Ascending aorta (tissue), 2 donors: ENCODE measurements at regions of chr9 and their contacts with region 1.

Region 1: DNA sequence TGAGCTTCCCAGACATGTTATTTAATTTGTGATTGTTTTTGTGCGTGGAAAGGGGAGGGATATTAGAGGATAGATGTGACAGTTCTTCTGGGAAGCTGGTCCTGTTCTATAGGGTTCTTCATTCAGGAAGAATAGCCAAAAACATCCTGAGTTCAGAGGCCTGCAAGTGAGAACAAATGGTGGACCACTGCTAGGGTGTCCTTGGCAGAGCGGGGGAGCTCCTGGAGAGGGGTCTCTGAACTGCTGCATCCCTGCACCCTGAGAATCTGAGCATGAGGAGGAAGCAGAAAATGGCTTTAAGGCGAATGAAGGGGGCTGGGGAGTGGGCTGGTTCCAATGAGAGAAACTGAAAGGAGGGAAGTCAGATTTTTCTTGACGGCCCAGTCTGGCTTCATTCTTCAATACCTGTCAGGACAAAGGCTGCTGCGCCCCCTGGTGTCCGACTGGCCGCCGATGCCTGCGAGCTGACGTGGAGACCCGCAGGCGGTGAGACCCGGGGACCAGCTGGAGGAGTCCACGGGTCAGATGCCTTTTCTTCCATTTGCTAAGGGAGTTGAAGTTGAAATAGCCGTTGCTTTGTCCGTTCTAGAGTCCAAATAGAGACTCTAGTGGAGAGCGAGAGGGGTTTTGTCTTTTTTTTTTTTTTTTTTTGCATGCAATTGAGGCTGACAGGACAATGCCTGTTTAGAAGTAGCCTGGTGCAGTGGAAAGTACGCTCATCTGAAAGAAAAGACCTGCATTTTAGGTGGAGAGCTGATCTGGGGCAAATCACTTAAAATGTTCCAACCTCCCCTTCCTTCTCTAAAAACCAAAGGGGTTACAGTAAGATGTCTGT is 39.5 kb upstream of the NFIB start:
- DNase-seq: peak; percentile 49 to 96
- H3K4me3 ChIP-seq: peak overlapping the region; percentile 18 to 68
- H3K27ac ChIP-seq: peak overlapping the region; percentile 87 to 90
- H3K4me1 ChIP-seq: peaks cover 14 to 35% of the 10 kb centered on the region in 2 donors
- H3K27me3 ChIP-seq: no peaks in the 10 kb centered on the region
- CTCF ChIP-seq: peak; percentile 87 to 96 (median 90)

Region 2: DNA sequence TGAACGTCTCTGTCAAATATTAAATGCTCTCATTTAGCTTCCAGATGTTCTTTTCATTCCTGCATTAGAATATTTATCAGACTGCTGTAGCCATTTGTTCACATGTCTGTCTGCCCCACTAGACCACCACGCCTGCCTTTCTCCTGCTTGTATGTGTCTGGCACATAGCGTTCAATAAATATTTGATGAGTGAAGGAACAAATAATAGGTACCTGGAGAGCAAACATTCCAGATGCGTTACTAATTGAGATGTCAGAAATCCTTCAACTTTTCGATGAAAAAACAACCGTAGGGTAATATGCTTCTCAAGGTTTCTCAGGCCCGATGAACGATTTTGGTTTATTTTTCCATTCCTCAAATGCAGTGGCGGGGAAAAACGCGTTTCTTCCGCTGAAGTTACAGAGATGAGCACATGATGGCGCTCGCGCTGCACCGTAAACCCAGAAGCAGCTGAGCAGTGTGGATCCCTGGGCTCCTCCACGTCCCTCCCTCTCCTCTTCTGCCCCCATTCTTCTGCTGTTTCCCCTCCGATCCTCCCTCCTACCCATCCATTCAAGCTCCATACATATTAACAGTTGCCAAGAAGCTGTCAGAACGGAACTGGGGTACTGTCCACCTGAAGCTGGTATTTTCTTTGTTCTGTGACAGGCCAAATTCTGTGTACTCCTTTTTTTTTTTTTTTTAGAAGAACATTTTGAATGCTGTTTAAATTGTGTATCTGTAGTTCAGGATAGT is 1319.3 kb before region 1 on chr9:
- intact Hi-C with region 1: loop called (anchors 10 kb)
- DNase-seq: peak in 1 of 2 donors; percentile 77
- H3K4me3 ChIP-seq: peak overlapping the region in 1 of 2 donors; percentile 55
- H3K27ac ChIP-seq: no peak overlapping the region
- H3K4me1 ChIP-seq: no peaks in the 10 kb centered on the region
- H3K27me3 ChIP-seq: no peaks in the 10 kb centered on the region
- CTCF ChIP-seq: peak; percentile 67 to 77 (median 67)

Region 3: GRCh38 chr9:13427587-13427986 is 925.9 kb before region 1 on chr9:
- intact Hi-C with region 1: loop called (anchors 1 kb)
- DNase-seq: no peak
- H3K4me3 ChIP-seq: no peak overlapping the region
- H3K27ac ChIP-seq: no peak overlapping the region
- H3K4me1 ChIP-seq: no peaks in the 10 kb centered on the region
- H3K27me3 ChIP-seq: no peaks in the 10 kb centered on the region
- CTCF ChIP-seq: peak; percentile 52 to 79 (median 68)

Region 4: DNA sequence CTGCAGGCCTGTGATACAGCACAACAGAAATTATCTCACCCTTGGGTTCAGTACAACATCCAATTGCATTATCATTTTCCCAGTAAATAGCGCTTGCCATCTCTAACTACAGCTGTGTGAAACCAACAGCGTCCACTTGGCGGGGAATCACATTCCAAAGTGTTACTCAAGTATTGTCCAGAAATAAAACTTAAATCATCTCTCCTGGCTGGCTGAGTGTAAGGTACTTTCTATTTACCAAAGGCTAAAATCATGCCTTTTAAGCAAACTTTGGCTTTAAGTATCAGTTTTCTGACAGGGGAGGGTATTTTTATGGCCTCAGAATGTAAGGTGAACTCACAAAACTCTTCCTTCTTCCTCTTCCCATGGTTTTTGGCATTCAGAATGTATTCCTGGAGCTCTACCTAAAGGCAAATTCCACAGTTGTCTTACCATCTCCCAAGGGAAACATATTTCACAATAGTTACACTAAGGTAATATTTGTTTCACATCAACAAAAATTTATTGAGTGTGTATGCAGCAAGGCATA is 868.3 kb before region 1 on chr9:
- intact Hi-C with region 1: loop called (anchors 5 kb)
- DNase-seq: peak in 1 of 2 donors; percentile 87
- H3K4me3 ChIP-seq: peak overlapping the region in 1 of 2 donors; percentile 33
- H3K27ac ChIP-seq: peak overlapping the region; percentile 60 to 74
- H3K4me1 ChIP-seq: peaks cover 0 to 14% of the 10 kb centered on the region in 2 donors
- H3K27me3 ChIP-seq: no peaks in the 10 kb centered on the region
- CTCF ChIP-seq: peak in 2 of 3 experiments; percentile 8 to 14

Region 5: GRCh38 chr9:13705918-13706317 is 647.5 kb before region 1 on chr9:
- intact Hi-C with region 1: loop called (anchors 10 kb)
- DNase-seq: peak in 1 of 2 donors; percentile 75
- H3K4me3 ChIP-seq: no peak overlapping the region
- H3K27ac ChIP-seq: peak overlapping the region; percentile 37 to 57
- H3K4me1 ChIP-seq: peaks cover 4 to 18% of the 10 kb centered on the region in 2 donors
- H3K27me3 ChIP-seq: no peaks in the 10 kb centered on the region
- CTCF ChIP-seq: no peak

Region 6: DNA sequence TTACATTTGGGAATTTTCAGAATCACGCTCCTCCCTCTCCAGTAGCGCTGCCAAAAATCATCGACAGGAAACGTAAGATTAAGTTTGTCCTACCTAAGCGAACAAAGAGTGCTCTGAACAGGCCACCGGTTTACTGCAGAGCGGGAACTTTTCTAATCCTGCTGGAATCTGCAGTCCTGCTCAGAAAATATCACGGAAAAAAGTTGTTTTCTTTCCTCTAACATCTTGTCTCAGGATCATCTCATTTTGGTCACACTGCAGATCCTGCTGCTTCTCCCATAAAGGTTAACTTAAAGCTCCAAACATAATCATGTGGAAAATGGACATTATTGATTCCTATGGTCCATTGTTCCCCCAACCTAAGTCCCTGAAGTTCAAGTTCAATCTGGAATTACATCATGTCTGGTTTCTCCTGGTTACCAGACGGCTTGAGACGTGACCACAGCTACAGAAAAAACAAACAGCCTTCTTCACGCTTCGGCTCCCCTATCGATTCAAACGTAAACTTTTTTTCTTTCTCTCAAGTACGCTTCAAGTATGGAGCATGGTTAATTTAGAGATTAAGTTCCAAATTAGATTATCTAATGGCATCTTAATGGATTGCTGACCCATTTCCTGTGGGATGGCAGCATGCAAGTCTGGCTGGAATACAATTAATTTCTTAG is 257.0 kb before region 1 on chr9:
- intact Hi-C with region 1: loop called (anchors 5 kb)
- DNase-seq: peak in 1 of 2 donors; percentile 73
- H3K4me3 ChIP-seq: peak overlapping the region; percentile 22 to 50
- H3K27ac ChIP-seq: peak overlapping the region; percentile 76 to 84
- H3K4me1 ChIP-seq: peaks cover 9 to 21% of the 10 kb centered on the region in 2 donors
- H3K27me3 ChIP-seq: no peaks in the 10 kb centered on the region
- CTCF ChIP-seq: no peak

Region 7: DNA sequence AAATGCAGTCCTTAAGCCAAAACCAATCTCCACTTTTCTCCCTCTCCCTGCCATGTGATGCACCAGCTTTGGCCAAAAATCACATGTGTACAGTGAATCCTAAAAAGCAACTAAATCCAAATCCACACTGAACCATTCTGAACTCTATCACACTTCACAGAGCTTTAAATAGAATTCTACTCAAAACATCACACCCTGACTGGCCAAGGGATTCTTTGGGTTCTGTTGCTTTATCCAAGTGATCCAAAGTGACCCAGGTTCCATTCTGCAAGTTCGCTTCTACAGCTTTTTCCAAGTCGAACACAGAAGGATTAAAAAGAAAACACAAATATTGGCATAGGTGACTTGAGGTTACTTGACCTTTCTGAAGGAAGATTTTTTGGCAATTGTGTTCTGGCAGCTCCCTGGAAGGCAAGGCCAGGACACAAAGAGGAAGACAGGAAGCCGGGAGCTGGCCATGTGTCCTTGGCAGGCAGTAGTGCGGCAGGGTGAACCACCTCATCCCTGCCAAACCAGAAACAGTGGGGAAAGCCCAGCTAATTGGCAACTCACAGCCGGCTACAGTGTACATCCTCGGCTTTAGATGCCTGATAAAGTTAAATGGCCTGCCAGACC is 154.5 kb before region 1 on chr9:
- intact Hi-C with region 1: no loop called
- DNase-seq: peak in 1 of 2 donors; percentile 73
- H3K4me3 ChIP-seq: peak overlapping the region; percentile 6 to 22
- H3K27ac ChIP-seq: peak overlapping the region; percentile 13 to 68
- H3K4me1 ChIP-seq: peaks cover 0 to 41% of the 10 kb centered on the region in 2 donors
- H3K27me3 ChIP-seq: no peaks in the 10 kb centered on the region
- CTCF ChIP-seq: no peak

Region 8: DNA sequence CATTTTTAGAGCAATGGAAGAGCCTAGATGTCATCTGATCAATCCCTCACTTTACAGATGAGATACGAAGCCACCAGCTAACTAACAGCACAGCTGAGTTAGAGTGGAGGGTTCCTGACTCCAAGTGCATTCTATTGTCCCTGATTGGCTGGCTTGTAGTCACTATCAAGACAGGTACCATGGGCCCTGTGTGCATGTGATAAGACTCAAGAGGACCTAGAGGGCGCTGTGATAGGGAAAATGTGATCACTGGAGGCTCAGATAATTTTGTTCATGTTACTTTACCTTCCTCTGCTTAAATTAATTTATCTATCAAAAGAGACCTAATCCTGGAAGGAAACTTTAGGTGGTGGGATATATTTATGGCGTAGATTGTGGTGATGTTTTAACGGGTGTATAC is 1049.7 kb after region 1 on chr9:
- intact Hi-C with region 1: no loop called
- DNase-seq: no peak
- H3K4me3 ChIP-seq: no peak overlapping the region
- H3K27ac ChIP-seq: peak overlapping the region in 1 of 2 donors; percentile 7
- H3K4me1 ChIP-seq: peaks cover 3 to 17% of the 10 kb centered on the region in 2 donors
- H3K27me3 ChIP-seq: no peaks in the 10 kb centered on the region
- CTCF ChIP-seq: no peak